Esophagus muscularis mucosa (tissue), 4 donors: ENCODE measurements at regions of chr3 and their contacts with region 1.

Region 1: DNA sequence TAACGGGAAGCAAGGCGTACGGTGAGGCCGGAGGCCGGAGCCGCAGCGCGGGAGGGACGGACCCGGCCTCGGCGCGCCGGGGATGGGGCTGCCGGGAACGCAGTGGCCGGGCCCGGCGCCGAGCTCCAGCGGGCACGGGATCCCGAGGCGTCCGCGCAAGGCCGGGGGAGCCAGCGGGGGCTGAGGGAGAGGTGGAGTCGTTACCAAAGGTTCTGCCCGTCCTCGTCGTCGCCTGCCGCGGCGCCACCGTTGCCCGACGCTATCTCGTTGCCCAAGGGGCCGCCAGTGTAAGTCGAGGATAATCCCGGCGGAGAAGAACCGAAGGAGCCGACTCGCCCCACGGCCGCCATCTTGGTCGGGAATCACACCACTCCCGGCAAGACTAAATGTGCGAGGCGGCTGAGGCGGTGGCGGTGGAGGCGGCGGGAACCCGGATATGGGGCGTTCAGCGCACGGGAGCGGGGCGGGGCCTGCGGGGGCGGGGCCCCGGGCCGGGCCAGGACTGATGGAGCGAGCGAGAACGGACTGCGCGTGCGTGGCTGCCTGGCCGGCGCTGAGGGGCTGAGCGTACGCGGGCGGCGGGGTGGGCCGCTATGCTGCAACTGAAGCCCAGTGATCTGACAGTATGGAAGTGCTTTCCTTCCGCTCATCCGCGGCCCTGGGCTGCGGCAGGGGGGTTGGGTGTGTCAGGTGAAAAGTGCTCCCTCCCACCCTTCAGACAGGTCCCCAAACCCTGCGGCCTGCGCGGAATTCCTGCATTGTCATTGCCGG is at the start of gene DYNC1LI1:
- DNase-seq: peak; percentile 98
- H3K4me3 ChIP-seq: peak within 1 kb of the TSS; percentile 89 to 100 (median 94)
- H3K27ac ChIP-seq: peak within 1 kb of the TSS; percentile 95 to 100 (median 98)
- H3K4me1 ChIP-seq: peaks cover 15 to 43% (median 31%) of the 10 kb centered on the region in 4 donors
- H3K27me3 ChIP-seq: no peaks in the 10 kb centered on the region
- CTCF ChIP-seq: no peak
- EP300 ChIP-seq: no peak
- POLR2A ChIP-seq: peak; percentile 15
- total RNA-seq, gene DYNC1LI1: 30.0 to 38.2 (median 32.5) TPM

Region 2: GRCh38 chr3:32510075-32510724 is 60.4 kb before region 1 on chr3:
- intact Hi-C with region 1: loop called (anchors 10 kb)
- DNase-seq: no peak
- H3K4me3 ChIP-seq: no peak overlapping the region
- H3K27ac ChIP-seq: no peak overlapping the region
- H3K4me1 ChIP-seq: peaks cover 0 to 6% (median 0%) of the 10 kb centered on the region in 4 donors
- H3K27me3 ChIP-seq: no peaks in the 10 kb centered on the region
- CTCF ChIP-seq: peak; percentile 59 to 67 (median 66)
- EP300 ChIP-seq: no peak
- POLR2A ChIP-seq: no peak

Region 3: GRCh38 chr3:32684800-32685542 is 114.4 kb after region 1 on chr3 and contains the start of gene CNOT10:
- intact Hi-C with region 1: loop called (anchors 5 kb)
- DNase-seq: peak; percentile 96
- H3K4me3 ChIP-seq: peak within 1 kb of the TSS; percentile 76 to 91 (median 80)
- H3K27ac ChIP-seq: peak within 1 kb of the TSS; percentile 83 to 92 (median 85)
- H3K4me1 ChIP-seq: peaks cover 17 to 30% (median 27%) of the 10 kb centered on the region in 4 donors
- H3K27me3 ChIP-seq: no peaks in the 10 kb centered on the region
- CTCF ChIP-seq: peak in 1 of 3 experiments; percentile 5
- EP300 ChIP-seq: no peak
- POLR2A ChIP-seq: no peak
- total RNA-seq, gene CNOT10: 10.8 to 16.8 (median 15.4) TPM